ENCODE measurements at regions of chr6 and their contacts with region 1.

Region 1: GRCh38 chr6:4433199-4433598 is 297.8 kb upstream of the ECI2 start:
- DNase-seq: no peak
- ATAC-seq: no peak

Region 2: DNA sequence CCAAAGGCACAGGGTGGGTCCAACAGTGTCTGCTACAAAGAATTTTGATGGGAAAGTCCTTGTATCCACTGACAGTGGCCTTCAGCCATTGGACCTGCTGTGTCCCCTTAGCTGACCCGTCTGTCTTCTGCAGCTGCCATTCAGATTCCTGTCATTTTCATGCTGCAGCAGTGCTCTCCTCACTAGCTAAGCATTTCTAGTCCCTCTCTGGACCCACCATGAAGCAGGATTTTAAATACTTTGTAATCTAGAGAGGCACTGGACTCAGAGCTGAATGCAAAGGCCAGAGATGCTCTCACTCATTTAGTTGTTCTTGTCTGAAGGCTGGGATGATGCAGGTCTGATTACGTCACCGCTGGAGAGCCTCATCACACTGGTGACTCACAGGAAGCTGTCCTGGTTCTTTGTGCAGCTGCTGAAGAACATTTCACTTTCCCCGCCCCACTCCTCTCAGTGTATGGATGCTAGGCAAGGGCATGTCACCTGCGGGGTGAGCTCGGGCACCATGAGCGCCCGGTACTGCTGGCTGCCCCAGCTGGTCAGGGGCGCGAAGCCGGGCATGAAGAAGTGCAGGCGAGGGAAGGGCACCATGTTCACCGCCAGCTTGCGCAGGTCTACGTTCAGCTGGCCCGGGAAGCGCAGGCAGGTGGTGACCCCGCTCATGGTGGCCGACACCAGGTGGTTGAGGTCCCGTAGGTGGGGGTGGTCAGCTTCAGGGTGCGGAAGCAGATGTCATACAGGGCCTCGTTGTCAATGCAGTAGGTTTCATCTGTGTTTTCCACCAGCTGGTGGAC is 1256.4 kb before region 1 on chr6:
- intact Hi-C with region 1: no loop called
- DNase-seq: no peak
- ATAC-seq: peak; percentile 44

Region 3: DNA sequence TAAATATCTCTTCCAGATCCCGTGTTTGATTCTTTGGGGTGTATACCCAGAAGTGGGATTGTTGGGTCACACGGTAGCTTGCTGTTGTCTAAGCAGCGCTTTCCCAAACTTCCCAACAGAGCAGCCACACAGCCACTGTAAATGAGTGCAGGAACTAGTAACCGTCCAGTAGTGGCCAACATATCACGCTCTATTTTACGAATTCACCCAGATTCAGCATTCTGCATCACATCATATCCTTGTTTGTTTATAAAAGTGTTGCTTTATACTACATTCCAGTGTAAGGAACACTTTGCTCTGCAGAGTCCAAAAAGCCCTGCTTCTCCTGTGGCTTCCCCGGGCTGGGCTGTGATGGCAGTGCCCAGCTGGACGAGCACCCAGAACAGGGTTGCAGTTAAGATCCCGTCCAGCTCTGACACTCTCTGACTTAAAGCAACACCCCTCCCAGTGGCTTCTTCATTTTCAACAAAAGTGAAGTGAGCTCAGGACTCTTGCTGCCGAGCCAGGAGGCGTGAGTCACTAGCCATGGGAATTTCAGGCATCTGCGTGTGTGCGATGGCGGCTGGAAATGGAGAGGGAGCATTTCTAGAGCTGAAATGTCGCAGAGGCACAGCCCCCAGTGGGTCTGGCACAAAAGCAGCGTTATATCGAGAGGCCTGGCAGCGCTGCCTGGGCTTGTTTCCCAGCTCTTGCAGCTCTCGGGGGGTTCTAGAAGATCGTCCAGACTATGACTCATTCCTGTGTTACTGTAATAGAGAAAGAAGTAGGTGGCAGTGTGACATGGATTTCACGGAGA is 81.5 kb before region 1 on chr6:
- intact Hi-C with region 1: no loop called
- DNase-seq: peak; percentile 76
- ATAC-seq: peak; percentile 86

Region 4: DNA sequence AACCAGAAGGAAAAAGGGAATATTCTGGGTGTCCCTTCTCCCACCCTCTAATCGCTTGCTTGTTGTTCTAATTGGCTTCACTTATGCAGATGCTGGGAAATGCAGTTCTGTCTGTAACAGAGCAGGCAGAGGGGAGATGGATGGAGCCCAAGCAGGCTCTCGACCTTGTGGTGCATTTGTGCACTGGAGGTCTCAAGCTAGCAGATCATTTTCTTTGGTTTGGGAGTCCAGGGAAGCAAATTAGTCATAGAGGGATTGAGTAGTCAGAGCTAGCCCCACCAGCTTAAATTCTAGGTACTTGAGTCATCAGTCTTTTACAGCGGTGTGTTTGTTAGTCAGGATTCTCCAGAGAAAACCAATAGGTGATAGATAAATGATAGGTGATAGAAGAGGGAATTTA is 63.1 kb before region 1 on chr6:
- intact Hi-C with region 1: no loop called
- DNase-seq: no peak
- ATAC-seq: no peak

Region 5: GRCh38 chr6:4381381-4381780 is 51.8 kb before region 1 on chr6:
- intact Hi-C with region 1: loop called (anchors 2 kb)
- DNase-seq: no peak
- ATAC-seq: no peak

Measured in sciatic nerve (tissue), 2 donors.